ENCODE measurements at regions of chr9 and their contacts with region 1.

Region 1: GRCh38 chr9:136493567-136493971 is 10.7 kb upstream of the SEC16A start:
- DNase-seq: no peak
- ATAC-seq: no peak
- H3K4me3 ChIP-seq: no peak overlapping the region
- H3K27ac ChIP-seq: no peak overlapping the region
- H3K4me1 ChIP-seq: no peaks in the 10 kb centered on the region
- H3K27me3 ChIP-seq: no peaks in the 10 kb centered on the region

Region 2: GRCh38 chr9:136354592-136355085 is 138.9 kb before region 1 on chr9:
- intact Hi-C with region 1: no loop called
- DNase-seq: no peak
- ATAC-seq: no peak
- H3K4me3 ChIP-seq: no peak overlapping the region
- H3K27ac ChIP-seq: no peak overlapping the region
- H3K4me1 ChIP-seq: no peaks in the 10 kb centered on the region
- H3K27me3 ChIP-seq: no peaks in the 10 kb centered on the region

Region 3: DNA sequence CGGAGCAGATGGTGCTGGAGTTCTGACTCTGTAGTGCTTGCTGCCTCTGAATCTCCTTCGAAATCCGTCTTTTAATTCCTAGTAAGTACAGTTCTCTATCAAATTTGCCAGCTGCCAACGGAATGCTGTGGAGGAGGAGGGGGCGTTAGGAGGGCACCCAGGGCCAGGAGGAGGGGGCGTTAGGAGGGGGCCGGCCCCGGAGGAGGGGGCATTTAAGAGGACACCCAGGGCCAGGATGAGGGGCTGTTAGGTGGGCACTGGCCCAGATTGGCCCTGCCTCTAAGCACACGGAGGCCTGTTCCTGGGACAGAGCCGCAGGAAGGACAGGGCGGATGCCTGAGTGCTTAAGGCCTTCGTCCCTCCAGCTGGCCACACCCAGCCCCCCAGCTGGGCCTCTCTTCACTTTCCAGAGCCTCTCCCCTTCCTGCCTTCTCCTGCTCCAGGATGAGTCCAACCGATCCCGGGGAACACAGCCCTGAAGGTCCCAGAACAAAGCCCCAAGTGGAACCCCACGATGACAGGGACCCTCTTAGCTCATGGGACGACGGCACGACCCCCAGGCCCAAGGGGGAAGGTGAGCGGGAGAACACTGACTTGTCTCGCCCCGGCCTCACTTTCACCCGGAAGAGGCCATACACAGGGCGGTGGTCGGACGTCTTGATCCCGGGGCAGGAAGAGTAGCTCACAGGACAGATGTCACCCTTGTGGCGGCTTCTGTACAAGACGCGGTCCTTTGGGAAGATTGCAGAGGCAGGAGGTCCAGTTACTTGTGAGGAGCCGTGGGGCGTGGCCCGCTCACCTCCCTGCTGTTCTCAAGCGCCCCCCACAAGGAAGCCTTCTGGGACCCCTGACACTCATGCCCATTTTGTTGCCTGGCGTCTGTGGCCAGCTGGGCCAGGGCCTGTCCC is 63.6 kb before region 1 on chr9:
- intact Hi-C with region 1: no loop called
- DNase-seq: no peak
- ATAC-seq: no peak
- H3K4me3 ChIP-seq: no peak overlapping the region
- H3K27ac ChIP-seq: no peak overlapping the region
- H3K4me1 ChIP-seq: no peaks in the 10 kb centered on the region
- H3K27me3 ChIP-seq: no peaks in the 10 kb centered on the region

Region 4: DNA sequence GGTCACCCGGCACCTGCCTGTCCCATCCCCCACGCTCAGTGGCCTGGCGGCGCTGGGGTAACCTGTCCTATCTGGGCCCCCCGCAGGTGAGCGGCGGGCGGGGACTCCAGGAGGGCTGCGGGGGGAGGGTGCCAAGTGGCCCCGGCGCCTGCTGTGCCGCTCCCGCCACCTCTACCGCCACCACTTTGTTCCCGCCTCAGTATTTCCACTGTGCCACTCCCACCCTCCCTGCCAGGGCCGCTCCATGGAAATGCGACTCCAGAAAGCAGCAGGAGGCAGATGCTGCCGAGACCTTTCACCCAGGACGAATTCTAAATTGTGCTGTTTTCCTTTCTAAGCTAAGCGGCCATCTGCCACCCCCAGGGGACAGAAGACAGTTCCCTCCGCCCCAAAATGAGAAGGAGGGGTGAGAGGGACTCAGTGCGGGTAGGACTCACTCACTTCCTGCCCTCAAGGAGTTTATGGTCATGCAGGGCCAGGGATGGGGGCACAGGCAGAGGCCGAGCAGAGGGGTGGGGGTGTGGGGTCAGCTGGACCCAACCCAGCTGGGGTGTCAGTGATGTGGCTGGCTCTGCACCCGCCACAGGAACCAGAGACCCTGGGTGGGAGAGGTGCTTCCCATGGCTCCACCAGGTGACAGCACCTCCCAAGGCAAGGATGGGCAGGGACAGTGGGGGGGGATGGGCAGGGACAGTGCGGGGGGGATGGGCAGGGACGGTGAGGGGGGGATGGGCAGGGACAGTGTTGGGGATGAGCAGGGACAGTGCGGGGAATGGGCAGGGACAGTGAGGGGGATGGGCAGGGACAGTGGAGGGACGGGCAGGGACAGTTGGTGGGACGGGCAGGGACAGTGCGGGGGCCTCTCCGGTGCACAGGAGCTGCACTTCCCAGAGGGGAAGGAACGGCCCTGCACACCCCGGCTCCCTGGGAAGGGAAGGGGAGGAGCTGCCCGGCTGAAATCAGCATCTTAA is 34.4 kb after region 1 on chr9:
- intact Hi-C with region 1: loop called (anchors 2 to 5 kb)
- DNase-seq: no peak
- ATAC-seq: no peak
- H3K4me3 ChIP-seq: no peak overlapping the region
- H3K27ac ChIP-seq: no peak overlapping the region
- H3K4me1 ChIP-seq: no peaks in the 10 kb centered on the region
- H3K27me3 ChIP-seq: no peaks in the 10 kb centered on the region

Region 5: GRCh38 chr9:136539427-136540421 is 46.2 kb after region 1 on chr9:
- intact Hi-C with region 1: loop called in 1 of 2 experiments (anchors 5 kb)
- DNase-seq: peak; percentile 92 to 95
- ATAC-seq: peak; percentile 75
- H3K4me3 ChIP-seq: no peak overlapping the region
- H3K27ac ChIP-seq: no peak overlapping the region
- H3K4me1 ChIP-seq: no peaks in the 10 kb centered on the region
- H3K27me3 ChIP-seq: no peaks in the 10 kb centered on the region

Region 6: GRCh38 chr9:137326445-137327065 is 833.0 kb after region 1 on chr9:
- intact Hi-C with region 1: no loop called
- DNase-seq: no peak
- ATAC-seq: no peak
- H3K4me3 ChIP-seq: no peak overlapping the region
- H3K27ac ChIP-seq: no peak overlapping the region
- H3K4me1 ChIP-seq: no peaks in the 10 kb centered on the region
- H3K27me3 ChIP-seq: no peaks in the 10 kb centered on the region

Measured in aorta (tissue), 5 donors.